HCT116 (cell line): ENCODE measurements at regions of chr6 and their contacts with region 1.

Region 1: DNA sequence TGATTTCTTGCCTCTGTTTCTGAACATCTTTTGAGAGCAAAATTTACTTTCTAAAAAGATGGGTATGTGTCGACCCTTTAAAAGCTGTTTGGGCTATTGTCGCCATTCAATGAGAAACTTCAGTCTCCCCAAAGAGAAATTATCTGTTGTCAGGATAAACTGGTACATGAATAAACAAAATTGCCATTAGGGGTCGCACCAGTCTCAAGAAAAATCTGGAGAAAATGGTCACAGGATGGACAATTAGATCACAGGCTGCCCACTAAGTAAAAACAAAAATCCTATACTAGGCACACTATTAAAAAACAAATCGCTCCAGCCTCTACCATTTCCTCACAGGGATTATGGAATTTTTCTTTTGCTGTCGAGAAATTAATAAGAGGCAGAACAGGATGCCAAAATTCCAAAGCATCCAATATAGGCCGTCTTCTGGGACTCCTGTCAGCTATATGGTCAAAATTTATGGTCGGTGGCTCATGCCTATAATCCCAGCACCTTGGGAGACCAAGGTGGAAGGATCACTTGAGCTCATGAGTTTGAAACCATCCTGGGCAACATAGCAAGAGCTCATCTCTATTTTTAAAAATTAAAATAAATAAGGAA is 5.5 kb upstream of the HLA-E start:
- DNase-seq: peak; percentile 54
- ATAC-seq: peak; percentile 33; the same call in 1 of the 2 replicates
- H3K4me3 ChIP-seq: no peak overlapping the region
- H3K27ac ChIP-seq: no peak overlapping the region
- H3K4me1 ChIP-seq: peaks cover 0 to 7% of the 10 kb centered on the region in 2 experiments; a peak in 1 of 4 replicates
- H3K27me3 ChIP-seq: no peaks in the 10 kb centered on the region
- CTCF ChIP-seq: peak; percentile 43 to 88 (median 73)
- POLR2A ChIP-seq: no peak
- RAD21 ChIP-seq: peak; percentile 85

Region 2: GRCh38 chr6:30533460-30534294 is 49.9 kb after region 1 on chr6:
- CTCF ChIA-PET with region 1: interaction called, 24 read pairs
- POLR2A ChIA-PET with region 1: no interaction called
- RAD21 ChIA-PET with region 1: no interaction called
- intact Hi-C with region 1: loop called (anchors 1 kb)
- DNase-seq: no peak
- ATAC-seq: no peak
- H3K4me3 ChIP-seq: no peak overlapping the region
- H3K27ac ChIP-seq: no peak overlapping the region
- H3K4me1 ChIP-seq: peaks cover 0 to 4% of the 10 kb centered on the region in 2 experiments; a peak in 2 of 4 replicates
- H3K27me3 ChIP-seq: no peaks in the 10 kb centered on the region
- CTCF ChIP-seq: no peak
- POLR2A ChIP-seq: no peak
- RAD21 ChIP-seq: no peak

Region 3: GRCh38 chr6:30590994-30591393 is 107.2 kb after region 1 on chr6:
- CTCF ChIA-PET with region 1: interaction called, 21 read pairs
- POLR2A ChIA-PET with region 1: interaction called, 4 read pairs
- RAD21 ChIA-PET with region 1: interaction called in 1 of 2 experiments, 3 read pairs
- intact Hi-C with region 1: no loop called
- DNase-seq: no peak
- ATAC-seq: no peak
- H3K4me3 ChIP-seq: no peak overlapping the region
- H3K27ac ChIP-seq: peak overlapping the region; percentile 41; the same call in 1 of the 2 replicates
- H3K4me1 ChIP-seq: peaks cover 0 to 4% of the 10 kb centered on the region in 2 experiments; a peak in 1 of 4 replicates
- H3K27me3 ChIP-seq: no peaks in the 10 kb centered on the region
- CTCF ChIP-seq: no peak
- POLR2A ChIP-seq: no peak
- RAD21 ChIP-seq: no peak

Region 4: GRCh38 chr6:30616811-30617564 is 133.2 kb after region 1 on chr6 and contains the start of gene PPP1R10:
- CTCF ChIA-PET with region 1: interaction called, 10 read pairs
- POLR2A ChIA-PET with region 1: interaction called, 4 read pairs
- RAD21 ChIA-PET with region 1: no interaction called
- intact Hi-C with region 1: loop called (anchors 5 kb)
- DNase-seq: peak; percentile 100
- ATAC-seq: peak; percentile 81
- H3K4me3 ChIP-seq: peak within 1 kb of the TSS; percentile 92 to 94
- H3K27ac ChIP-seq: peak within 1 kb of the TSS; percentile 87
- H3K4me1 ChIP-seq: peaks cover 13 to 40% of the 10 kb centered on the region in 2 experiments
- H3K27me3 ChIP-seq: no peaks in the 10 kb centered on the region
- CTCF ChIP-seq: no peak
- POLR2A ChIP-seq: peak; percentile 99
- RAD21 ChIP-seq: no peak
- total RNA-seq, gene PPP1R10: 104 TPM

Region 5: DNA sequence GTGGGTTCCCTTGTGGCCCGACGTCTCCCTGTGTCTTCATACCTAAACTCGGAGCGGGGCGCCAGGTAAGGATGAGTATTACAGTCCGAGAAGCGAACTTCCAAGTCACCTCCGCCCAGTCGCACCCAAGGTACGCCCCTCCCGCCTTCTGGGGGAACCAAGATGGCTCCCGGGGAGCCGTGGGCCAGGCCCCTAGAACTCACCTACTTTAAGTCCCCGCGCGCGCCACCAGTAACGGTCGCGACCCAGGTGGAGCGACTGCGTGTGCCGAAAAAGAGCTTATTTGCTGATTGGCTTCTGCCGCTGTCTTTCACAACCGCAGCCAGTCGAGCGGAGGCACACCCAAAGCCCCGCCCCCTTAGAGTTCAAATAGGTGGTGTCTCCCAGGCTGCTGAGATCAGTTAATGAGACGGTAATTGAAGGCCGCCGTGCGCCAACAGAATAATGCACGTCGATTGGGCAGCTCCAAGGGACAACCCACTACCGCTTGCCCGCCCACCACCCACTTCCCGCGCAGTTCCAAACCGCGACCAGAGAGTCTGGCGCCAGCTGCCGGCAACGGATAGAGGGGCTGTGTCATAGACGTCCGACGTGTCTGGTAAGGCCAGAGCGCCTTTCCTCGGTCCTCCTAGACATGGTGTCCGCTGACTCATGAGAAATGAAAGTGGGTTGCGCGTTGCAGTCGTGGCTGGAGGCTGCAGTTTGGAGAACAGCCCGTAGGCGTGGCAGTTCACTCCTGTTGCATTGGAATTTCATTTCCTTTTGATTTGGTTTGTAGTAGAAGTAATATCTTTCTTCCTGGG is 233.5 kb after region 1 on chr6 and contains the start of gene MDC1:
- CTCF ChIA-PET with region 1: no interaction called
- POLR2A ChIA-PET with region 1: no interaction called
- RAD21 ChIA-PET with region 1: no interaction called
- intact Hi-C with region 1: loop called (anchors 2 kb)
- DNase-seq: peak; percentile 100
- ATAC-seq: peak; percentile 76
- H3K4me3 ChIP-seq: peak within 1 kb of the TSS; percentile 64 to 66
- H3K27ac ChIP-seq: peak within 1 kb of the TSS; percentile 89
- H3K4me1 ChIP-seq: peaks cover 9 to 43% of the 10 kb centered on the region in 2 experiments
- H3K27me3 ChIP-seq: no peaks in the 10 kb centered on the region
- CTCF ChIP-seq: peak in 1 of 3 experiments; percentile 31; a peak in 3 of 6 replicates
- POLR2A ChIP-seq: peak; percentile 76
- RAD21 ChIP-seq: no peak
- total RNA-seq, gene MDC1: 75.8 TPM

Region 6: GRCh38 chr6:31079656-31080261 is 596.0 kb after region 1 on chr6:
- CTCF ChIA-PET with region 1: interaction called, 4 read pairs
- POLR2A ChIA-PET with region 1: no interaction called
- RAD21 ChIA-PET with region 1: no interaction called
- intact Hi-C with region 1: loop called (anchors 5 kb)
- DNase-seq: peak; percentile 38
- ATAC-seq: peak; percentile 78
- H3K4me3 ChIP-seq: no peak overlapping the region
- H3K27ac ChIP-seq: no peak overlapping the region
- H3K4me1 ChIP-seq: peaks cover 0 to 18% of the 10 kb centered on the region in 2 experiments; a peak in 2 of 4 replicates
- H3K27me3 ChIP-seq: no peaks in the 10 kb centered on the region
- CTCF ChIP-seq: peak; percentile 79 to 90 (median 86)
- POLR2A ChIP-seq: no peak
- RAD21 ChIP-seq: peak; percentile 81